Adrenal gland (tissue), 19 donors: ENCODE measurements at regions of chr10 and their contacts with region 1.

Region 1: DNA sequence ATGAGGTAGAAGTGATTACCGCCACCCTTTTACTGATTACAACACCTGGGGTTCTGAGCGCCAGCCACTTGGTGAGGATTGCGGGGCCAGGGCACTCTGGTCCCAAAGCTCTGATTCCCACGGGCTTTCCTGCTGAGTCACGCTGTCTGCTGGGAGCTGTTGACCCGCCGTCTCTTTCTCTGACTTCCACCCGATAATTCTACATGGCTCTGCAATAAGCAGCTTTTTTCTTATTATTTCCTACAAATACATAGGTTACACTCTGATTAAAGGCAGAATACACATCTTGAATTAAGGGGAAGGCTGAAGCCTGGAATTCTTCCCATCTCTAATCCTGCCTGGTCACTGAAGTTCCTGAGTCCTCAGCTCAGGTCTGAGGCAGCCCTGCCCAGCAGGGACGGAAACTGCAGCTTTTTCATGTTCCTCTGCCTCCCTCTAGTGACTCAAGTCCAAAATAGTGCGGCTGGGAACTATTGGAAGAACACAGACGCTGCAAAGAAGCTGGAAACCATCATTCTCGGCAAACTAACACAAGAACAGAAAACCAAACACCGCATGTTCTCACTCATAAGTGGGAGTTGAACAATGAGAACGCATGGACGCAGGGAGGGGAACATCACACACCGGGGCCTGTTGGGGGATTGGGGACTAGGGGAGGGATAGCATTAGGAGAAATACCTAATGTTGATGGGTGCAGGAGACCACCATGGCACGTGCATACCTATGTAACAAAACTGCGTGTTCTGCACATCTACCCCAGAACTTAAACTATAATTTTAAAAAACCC is 178.3 kb downstream of the PRKCQ start:
- DNase-seq: peak; percentile 77 to 93 (median 84)
- H3K4me3 ChIP-seq: peak overlapping the region in 1 of 4 donors; percentile 46
- H3K27ac ChIP-seq: peak overlapping the region in 1 of 5 donors; percentile 59
- H3K4me1 ChIP-seq: peaks cover 0 to 14% of the 10 kb centered on the region in 2 donors
- H3K27me3 ChIP-seq: peaks cover 10% of the 10 kb centered on the region
- CTCF ChIP-seq: peak; percentile 45 to 94 (median 88)
- POLR2A ChIP-seq: no peak

Region 2: DNA sequence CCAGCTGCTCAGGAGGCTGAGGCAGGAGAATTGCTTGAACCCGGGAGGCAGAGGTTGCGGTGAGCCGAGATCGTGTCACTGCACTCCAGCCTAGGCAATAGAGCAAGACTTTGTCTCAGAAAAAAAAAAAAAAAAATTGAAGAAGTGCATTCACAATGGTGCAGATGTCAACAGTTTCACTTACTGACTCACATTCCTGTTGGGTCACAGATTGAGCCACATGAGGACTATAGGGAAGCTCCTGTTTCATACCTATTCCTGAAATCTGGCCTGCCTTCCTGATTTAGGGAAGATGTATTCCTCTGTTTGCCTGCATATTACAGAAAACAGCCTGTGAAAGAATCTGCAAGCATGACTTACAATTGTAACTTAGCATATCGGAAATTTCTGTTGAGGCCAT is 1127.0 kb before region 1 on chr10:
- intact Hi-C with region 1: no loop called
- DNase-seq: no peak
- H3K4me3 ChIP-seq: no peak overlapping the region
- H3K27ac ChIP-seq: no peak overlapping the region
- H3K4me1 ChIP-seq: no peaks in the 10 kb centered on the region
- H3K27me3 ChIP-seq: no peaks in the 10 kb centered on the region
- CTCF ChIP-seq: no peak
- POLR2A ChIP-seq: no peak

Region 3: GRCh38 chr10:6014241-6014761 is 387.5 kb before region 1 on chr10:
- intact Hi-C with region 1: loop called in 1 of 2 experiments (anchors 5 kb)
- DNase-seq: peak; percentile 48 to 84 (median 56)
- H3K4me3 ChIP-seq: no peak overlapping the region
- H3K27ac ChIP-seq: no peak overlapping the region
- H3K4me1 ChIP-seq: no peaks in the 10 kb centered on the region
- H3K27me3 ChIP-seq: no peaks in the 10 kb centered on the region
- CTCF ChIP-seq: peak; percentile 56 to 77 (median 70)
- POLR2A ChIP-seq: no peak

Region 4: DNA sequence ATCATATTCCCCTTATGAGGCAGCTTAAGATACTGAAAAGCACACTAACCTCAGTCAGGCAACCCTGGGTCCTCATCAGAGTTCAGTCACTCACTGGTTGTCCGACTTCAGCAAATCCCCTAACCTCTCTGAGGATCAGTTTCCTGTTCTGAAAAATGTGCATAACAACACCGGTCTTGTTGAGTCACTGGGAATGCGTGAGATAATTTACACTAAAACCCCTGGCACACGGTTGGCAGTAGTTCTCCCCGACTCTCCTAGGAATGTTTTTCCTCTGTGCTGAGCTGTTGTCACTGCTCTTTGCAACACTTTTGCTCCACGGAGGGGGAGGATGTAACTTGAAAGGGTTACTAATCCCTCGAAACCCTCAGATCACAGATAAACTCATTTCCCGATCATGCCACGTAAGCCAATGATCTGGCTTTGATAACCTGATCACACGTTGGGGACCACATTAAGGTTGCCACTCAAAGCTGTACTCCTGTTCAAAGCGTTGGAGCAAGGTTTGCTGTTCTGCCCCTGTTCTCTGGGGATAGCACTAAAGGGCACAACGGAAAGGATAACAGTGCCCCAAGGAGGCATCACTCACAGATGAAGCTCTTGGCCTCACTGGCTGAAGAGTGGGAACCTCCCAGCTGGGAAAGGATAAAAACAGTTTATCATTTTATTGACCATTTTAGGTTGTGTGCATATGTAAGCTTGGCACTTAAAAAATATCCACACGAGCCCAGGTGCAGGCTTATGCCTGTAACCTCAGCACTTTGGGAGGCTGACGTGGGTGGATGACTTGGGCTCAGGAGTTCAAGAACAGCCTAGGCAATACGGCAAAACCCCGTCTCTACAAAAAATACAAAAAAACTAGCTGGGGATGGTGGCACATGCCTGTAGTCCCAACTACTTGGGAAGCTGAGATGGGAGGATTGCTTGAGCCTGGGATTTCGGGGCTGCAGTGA is 318.0 kb before region 1 on chr10:
- intact Hi-C with region 1: loop called (anchors 2 to 10 kb)
- DNase-seq: no peak
- H3K4me3 ChIP-seq: no peak overlapping the region
- H3K27ac ChIP-seq: no peak overlapping the region
- H3K4me1 ChIP-seq: peaks cover 6 to 12% of the 10 kb centered on the region in 2 donors
- H3K27me3 ChIP-seq: no peaks in the 10 kb centered on the region
- CTCF ChIP-seq: no peak
- POLR2A ChIP-seq: no peak

Region 5: DNA sequence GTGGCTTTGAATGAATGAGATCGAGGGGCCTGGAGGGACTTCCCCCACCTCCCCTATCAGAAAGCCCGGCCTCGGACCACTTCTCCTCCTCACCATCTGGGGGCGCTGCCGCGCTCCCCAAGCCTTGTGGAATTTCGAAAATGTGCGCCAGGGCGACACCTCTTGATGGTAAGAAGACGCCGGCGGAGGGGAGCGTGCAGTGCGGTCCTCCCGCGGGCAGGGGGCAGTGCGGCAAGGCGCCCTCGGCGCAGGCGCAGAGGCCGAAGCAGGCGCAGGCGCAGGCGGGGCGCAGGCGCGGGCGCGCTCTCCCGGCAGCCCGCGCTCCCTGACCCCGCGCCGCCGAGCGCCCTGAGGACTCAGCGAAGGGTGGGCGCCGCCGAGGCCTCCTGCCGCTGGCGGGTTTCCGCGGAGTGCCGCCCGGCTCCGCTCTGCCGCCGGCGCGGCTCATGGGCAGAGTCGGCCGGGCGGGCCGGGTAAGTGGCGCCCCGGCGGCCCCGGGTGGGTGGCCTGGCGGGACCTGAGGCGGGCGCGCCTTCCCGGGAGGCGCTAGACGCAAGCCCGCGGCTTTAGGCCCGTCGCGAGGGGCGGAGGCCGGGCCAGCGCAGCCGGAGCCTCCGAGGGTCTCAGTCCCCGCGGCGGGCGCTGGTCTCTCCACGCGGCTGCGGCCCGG is 312.9 kb before region 1 on chr10 and contains the start of gene RBM17:
- intact Hi-C with region 1: loop called (anchors 2 to 10 kb)
- DNase-seq: peak; percentile 97 to 99 (median 98)
- H3K4me3 ChIP-seq: peak within 1 kb of the TSS; percentile 7 to 99 (median 81)
- H3K27ac ChIP-seq: peak within 1 kb of the TSS in 4 of 5 donors; percentile 80 to 97 (median 90)
- H3K4me1 ChIP-seq: peaks cover 17 to 47% of the 10 kb centered on the region in 2 donors
- H3K27me3 ChIP-seq: no peaks in the 10 kb centered on the region
- CTCF ChIP-seq: peak; percentile 99 to 100 (median 100)
- POLR2A ChIP-seq: peak; percentile 63 to 80
- total RNA-seq, gene RBM17: 31.9 to 72.1 (median 57.5) TPM

Region 6: GRCh38 chr10:6108603-6109443 is 292.9 kb before region 1 on chr10:
- intact Hi-C with region 1: loop called (anchors 5 kb)
- DNase-seq: peak in 1 of 7 donors; percentile 24
- H3K4me3 ChIP-seq: no peak overlapping the region
- H3K27ac ChIP-seq: no peak overlapping the region
- H3K4me1 ChIP-seq: peaks cover 0 to 3% of the 10 kb centered on the region in 2 donors
- H3K27me3 ChIP-seq: no peaks in the 10 kb centered on the region
- CTCF ChIP-seq: peak; percentile 56 to 93 (median 80)
- POLR2A ChIP-seq: no peak

Region 7: DNA sequence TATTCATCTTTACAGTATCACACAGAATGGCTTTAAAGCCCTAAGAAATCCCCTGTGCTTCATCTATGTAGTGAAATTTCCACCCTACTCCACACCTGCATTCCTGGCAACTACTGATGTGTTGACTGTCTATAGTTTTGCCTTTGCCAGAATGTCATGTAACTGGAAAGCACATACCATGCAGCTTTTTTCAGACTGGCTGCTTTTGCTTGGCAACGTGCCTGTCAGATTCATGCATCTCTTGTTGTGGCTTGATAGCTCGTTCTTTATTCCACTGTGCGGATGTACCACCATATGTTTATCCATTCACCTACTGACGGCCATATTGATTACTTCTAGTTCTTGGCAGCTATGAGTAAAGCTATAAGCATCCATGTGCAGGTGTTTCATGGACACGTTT is 282.3 kb before region 1 on chr10:
- intact Hi-C with region 1: no loop called
- DNase-seq: no peak
- H3K4me3 ChIP-seq: no peak overlapping the region
- H3K27ac ChIP-seq: no peak overlapping the region
- H3K4me1 ChIP-seq: peaks cover 0 to 20% of the 10 kb centered on the region in 2 donors
- H3K27me3 ChIP-seq: no peaks in the 10 kb centered on the region
- CTCF ChIP-seq: no peak
- POLR2A ChIP-seq: no peak

Region 8: DNA sequence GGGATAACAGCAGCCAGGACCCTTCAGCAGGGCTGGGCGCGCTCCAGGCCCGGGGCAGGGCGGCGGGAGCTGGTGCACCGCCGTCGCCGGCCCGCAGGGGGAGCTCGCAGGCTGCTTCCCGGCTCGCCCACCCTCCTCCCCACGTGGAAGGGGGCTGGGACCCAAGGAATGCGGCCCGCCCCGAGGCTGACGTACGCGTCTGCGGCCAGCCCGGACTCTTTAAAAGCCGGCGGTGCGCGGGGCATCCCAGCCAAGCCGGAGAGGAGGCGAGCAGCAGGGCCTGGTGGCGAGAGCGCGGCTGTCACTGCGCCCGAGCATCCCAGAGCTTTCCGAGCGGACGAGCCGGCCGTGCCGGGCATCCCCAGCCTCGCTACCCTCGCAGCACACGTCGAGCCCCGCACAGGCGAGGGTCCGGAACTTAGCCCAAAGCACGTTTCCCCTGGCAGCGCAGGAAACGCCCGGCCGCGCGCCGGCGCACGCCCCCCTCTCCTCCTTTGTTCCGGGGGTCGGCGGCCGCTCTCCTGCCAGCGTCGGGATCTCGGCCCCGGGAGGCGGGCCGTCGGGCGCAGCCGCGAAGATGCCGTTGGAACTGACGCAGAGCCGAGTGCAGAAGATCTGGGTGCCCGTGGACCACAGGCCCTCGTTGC is 198.9 kb before region 1 on chr10 and contains the start of gene PFKFB3:
- intact Hi-C with region 1: loop called (anchors 5 kb)
- DNase-seq: peak; percentile 95 to 97 (median 97)
- H3K4me3 ChIP-seq: peak within 1 kb of the TSS; percentile 44 to 82 (median 58)
- H3K27ac ChIP-seq: peak within 1 kb of the TSS in 4 of 5 donors; percentile 72 to 95 (median 90)
- H3K4me1 ChIP-seq: peaks cover 26 to 28% of the 10 kb centered on the region in 2 donors
- H3K27me3 ChIP-seq: no peaks in the 10 kb centered on the region
- CTCF ChIP-seq: peak; percentile 83 to 99 (median 96)
- POLR2A ChIP-seq: peak; percentile 98 to 99
- total RNA-seq, gene PFKFB3: 14.9 to 72.4 (median 36.8) TPM

Region 9: DNA sequence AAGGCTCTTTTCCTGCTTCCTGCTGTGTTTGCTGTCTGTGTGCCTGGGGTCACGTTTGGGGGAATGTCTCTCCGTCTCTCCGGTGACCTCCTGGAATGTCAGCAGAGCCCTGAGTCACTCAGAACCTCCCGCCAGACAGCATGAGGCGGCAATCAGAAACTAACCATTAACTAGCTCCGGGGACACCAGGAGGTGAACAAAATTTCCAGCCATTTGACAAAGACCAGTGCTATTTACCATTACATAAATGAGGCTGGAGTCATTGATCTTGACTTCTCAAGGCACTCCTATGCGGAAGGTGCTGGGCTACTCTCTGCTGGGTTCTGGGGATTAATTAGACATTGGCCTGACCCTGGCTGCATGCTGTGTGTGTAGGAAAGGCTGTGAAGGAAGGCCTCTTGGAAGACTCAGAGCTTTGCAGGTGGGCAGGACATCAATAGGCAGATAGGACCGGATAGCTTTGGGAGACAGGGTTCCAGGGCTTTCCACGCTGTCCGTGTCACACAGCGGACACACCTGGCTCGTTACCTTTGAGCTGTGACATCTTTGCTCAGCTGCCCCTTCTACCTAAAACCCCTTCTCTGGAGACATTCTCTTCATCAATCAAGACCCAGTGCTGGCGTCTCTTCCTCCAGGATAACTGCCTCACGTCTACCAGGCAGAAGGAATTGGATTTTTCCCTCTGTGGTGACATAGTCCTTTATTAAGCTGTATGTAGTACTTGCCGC is 122.1 kb before region 1 on chr10:
- intact Hi-C with region 1: no loop called
- DNase-seq: peak in 6 of 7 donors; percentile 28 to 69 (median 42)
- H3K4me3 ChIP-seq: no peak overlapping the region
- H3K27ac ChIP-seq: peak overlapping the region in 1 of 5 donors; percentile 66
- H3K4me1 ChIP-seq: peaks cover 0 to 8% of the 10 kb centered on the region in 2 donors
- H3K27me3 ChIP-seq: no peaks in the 10 kb centered on the region
- CTCF ChIP-seq: no peak
- POLR2A ChIP-seq: no peak